GM10248 (cell line): ENCODE measurements at regions of chr7 and their contacts with region 1.

Region 1: GRCh38 chr7:32846701-32847100 is 44.9 kb downstream of the KBTBD2 start:
- DNase-seq: peak; percentile 71
- CTCF ChIP-seq: peak; percentile 94

Region 2: GRCh38 chr7:31664890-31665289 is 1181.8 kb before region 1 on chr7:
- CTCF ChIA-PET with region 1: no interaction called
- POLR2A ChIA-PET with region 1: no interaction called
- DNase-seq: no peak
- CTCF ChIP-seq: no peak

Region 3: DNA sequence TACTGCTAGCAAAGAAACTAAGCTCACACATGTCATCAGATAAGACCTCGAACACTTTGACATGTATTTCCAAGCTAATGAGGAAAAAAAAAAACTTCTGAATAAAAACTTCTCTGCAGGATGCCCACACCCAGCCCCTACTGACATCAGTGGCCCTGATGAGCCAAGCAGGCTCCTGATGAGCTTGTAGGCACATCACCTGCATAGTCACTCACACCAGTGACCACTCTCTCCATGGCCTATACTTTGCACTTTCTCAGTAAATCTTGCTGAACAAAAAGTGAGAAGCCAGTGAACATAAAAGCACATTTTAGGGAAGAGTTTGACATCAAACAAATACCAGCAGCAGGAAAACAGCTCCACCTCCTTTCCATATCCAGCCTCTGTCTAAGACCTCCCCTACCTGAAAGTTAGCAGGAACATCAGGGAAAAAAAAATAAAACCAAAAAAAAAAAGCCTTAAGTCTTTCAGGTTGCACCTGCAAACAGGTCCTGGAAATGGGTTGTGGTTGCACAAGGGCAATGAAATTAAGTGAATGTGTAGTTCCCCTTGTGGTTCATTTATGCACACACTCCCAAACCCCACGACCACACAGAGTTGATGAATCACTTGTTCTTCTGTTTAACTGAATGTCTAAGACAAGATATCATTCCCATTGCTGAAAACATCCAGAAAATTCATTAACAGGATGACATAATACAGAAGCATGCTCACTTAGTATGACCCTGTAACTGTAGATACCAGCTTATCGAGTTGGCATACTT is 571.3 kb before region 1 on chr7:
- CTCF ChIA-PET with region 1: no interaction called
- POLR2A ChIA-PET with region 1: no interaction called
- DNase-seq: no peak
- CTCF ChIP-seq: no peak

Region 4: DNA sequence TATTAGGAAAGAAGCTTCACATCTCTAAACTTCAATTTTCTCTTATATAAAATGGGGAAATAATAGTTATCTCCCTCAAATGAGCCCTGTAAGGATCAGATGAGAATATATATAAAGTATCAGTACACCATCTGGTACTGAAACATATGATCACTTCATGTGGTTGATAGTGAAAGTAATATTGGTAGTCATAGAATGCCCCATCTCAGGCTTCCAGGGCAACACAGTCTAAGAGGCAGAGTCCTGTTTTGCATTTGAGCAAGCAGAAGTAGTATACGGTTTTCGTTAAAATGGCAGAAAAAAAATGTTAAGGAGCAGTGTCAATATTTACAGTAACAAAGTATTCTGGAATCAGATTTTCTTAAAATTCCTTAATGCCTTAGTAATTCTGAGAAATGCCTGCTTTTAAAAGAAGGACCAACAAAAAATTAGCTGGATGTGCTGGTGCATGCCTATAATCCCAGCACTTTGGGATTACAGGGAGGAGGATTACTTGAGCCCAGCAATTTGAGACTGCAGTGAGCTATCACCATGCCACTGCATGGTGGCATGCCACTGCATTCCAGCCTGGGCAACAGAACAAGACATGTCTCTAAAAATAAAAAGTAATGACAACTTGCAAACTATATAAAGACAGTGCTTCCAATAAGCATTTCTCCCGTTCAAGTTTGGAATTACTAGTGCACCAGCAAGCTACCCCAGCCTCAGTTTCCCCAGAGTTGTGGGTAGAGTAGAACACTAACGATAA is 25.1 kb after region 1 on chr7:
- CTCF ChIA-PET with region 1: interaction called, 44 read pairs
- POLR2A ChIA-PET with region 1: no interaction called
- DNase-seq: no peak
- CTCF ChIP-seq: no peak

Region 5: DNA sequence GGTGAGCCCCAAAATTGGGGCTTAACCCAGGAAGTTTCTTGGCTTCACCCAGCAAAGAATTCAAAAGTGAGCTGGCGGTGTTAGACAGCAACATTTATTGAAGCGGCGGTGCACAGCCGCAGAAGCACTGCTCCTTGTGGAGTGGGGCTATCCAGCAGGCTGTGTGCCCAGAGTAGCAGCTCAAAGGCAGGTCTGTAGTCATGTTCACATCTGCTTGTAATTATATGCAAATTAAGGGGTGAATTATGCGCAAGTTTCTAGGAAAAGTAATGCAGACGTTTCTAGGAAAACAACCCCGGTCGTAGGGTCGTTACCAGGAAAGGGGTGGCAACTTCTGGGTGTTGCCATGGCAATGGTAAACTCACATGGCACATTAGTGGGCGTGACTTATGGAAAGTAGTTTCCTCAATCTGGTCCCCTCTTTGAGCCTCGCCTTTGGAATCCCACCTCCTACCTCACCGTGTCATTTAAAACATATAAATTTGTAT is 58.5 kb after region 1 on chr7:
- CTCF ChIA-PET with region 1: interaction called, 11 read pairs
- POLR2A ChIA-PET with region 1: no interaction called
- DNase-seq: peak; percentile 23
- CTCF ChIP-seq: no peak

Region 6: DNA sequence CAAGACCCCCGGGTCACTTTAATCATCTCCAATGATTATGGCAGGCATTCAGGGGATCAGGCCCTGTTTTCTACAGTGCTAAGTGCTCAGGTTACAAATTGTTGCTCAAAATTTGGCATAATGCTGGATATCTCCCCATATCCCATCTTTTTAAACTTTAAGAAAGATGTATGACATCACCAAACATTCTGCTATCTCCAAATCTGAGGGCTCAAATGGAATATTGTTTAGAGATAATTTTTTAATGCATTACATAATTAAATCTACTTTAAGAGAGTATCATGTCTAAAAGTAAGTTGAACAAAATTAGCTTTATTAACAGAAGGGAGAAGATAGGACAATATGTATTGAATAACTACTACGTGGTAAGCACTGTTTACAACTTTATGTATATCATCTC is 202.0 kb after region 1 on chr7:
- CTCF ChIA-PET with region 1: interaction called, 22 read pairs
- POLR2A ChIA-PET with region 1: no interaction called
- DNase-seq: no peak
- CTCF ChIP-seq: no peak

Region 7: GRCh38 chr7:33101906-33102305 is 255.2 kb after region 1 on chr7:
- CTCF ChIA-PET with region 1: interaction called, 74 read pairs
- POLR2A ChIA-PET with region 1: no interaction called
- DNase-seq: no peak
- CTCF ChIP-seq: no peak